ENCODE measurements at regions of chr9 and their contacts with region 1.

Region 1: GRCh38 chr9:112411626-112412027 is 31.7 kb downstream of the HSDL2 start:
- DNase-seq: no peak
- ATAC-seq: no peak
- H3K4me3 ChIP-seq: no peak overlapping the region
- H3K4me3 Mint-ChIP-seq: no peak overlapping the region
- H3K27ac ChIP-seq: no peak overlapping the region
- H3K27ac Mint-ChIP-seq: no peak overlapping the region
- H3K4me1 ChIP-seq: no peaks in the 10 kb centered on the region
- H3K4me1 Mint-ChIP-seq: no peaks in the 10 kb centered on the region
- H3K27me3 ChIP-seq: no peaks in the 10 kb centered on the region
- H3K27me3 Mint-ChIP-seq: no peaks in the 10 kb centered on the region

Region 2: GRCh38 chr9:111743275-111743674 is 668.4 kb before region 1 on chr9:
- CTCF ChIA-PET with region 1: no interaction called
- POLR2A ChIA-PET with region 1: interaction called in 1 of 2 experiments, 15 read pairs
- DNase-seq: no peak
- ATAC-seq: no peak
- H3K4me3 ChIP-seq: no peak overlapping the region
- H3K4me3 Mint-ChIP-seq: no peak overlapping the region
- H3K27ac ChIP-seq: no peak overlapping the region
- H3K27ac Mint-ChIP-seq: no peak overlapping the region
- H3K4me1 ChIP-seq: no peaks in the 10 kb centered on the region
- H3K4me1 Mint-ChIP-seq: no peaks in the 10 kb centered on the region
- H3K27me3 ChIP-seq: no peaks in the 10 kb centered on the region
- H3K27me3 Mint-ChIP-seq: no peaks in the 10 kb centered on the region

Region 3: DNA sequence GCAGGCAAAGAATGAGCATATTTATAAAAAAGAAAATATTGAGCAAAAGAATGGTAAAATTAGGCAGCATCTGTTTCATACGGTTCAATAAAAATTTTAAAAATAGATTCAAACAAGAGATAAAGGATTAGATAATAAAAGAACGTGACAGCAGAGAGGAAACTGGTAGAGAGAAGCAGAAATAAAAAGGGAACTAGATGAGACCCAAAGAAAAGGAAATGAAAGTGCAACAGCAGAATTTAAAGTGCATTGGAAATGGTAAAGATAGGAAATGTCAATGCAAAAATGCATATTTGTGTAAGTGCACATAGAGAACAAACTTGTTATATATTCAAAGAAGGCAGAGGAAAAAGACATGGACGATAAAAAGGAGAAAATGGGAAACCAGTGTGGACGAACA is 306.7 kb before region 1 on chr9:
- CTCF ChIA-PET with region 1: no interaction called
- POLR2A ChIA-PET with region 1: no interaction called
- DNase-seq: no peak
- ATAC-seq: no peak
- H3K4me3 ChIP-seq: no peak overlapping the region
- H3K4me3 Mint-ChIP-seq: no peak overlapping the region
- H3K27ac ChIP-seq: no peak overlapping the region
- H3K27ac Mint-ChIP-seq: no peak overlapping the region
- H3K4me1 ChIP-seq: no peaks in the 10 kb centered on the region
- H3K4me1 Mint-ChIP-seq: peaks cover 0 to 7% (median 0%) of the 10 kb centered on the region in 3 donors
- H3K27me3 ChIP-seq: no peaks in the 10 kb centered on the region
- H3K27me3 Mint-ChIP-seq: no peaks in the 10 kb centered on the region

Measured in T-cell (primary cell).